Gastrocnemius medialis (tissue), 4 donors: ENCODE measurements at regions of chr12 and their contacts with region 1.

Region 1: GRCh38 chr12:42325653-42326474 is at the starts of genes PPHLN1 and ZCRB1:
- DNase-seq: peak; percentile 66 to 79
- ATAC-seq: peak; percentile 93 to 96
- H3K4me3 ChIP-seq: peak within 1 kb of the TSS; percentile 75 to 94 (median 83)
- H3K27ac ChIP-seq: peak within 1 kb of the TSS; percentile 84 to 90 (median 88)
- H3K4me1 ChIP-seq: peaks cover 14 to 17% of the 10 kb centered on the region in 2 donors
- H3K27me3 ChIP-seq: no peaks in the 10 kb centered on the region
- CTCF ChIP-seq: peak in 1 of 5 experiments; percentile 7
- POLR2A ChIP-seq: peak; percentile 65 to 71
- total RNA-seq, gene PPHLN1: 32.7 to 52.3 (median 43.5) TPM
- total RNA-seq, gene ZCRB1: 24.4 to 42.4 (median 35.0) TPM

Region 2: DNA sequence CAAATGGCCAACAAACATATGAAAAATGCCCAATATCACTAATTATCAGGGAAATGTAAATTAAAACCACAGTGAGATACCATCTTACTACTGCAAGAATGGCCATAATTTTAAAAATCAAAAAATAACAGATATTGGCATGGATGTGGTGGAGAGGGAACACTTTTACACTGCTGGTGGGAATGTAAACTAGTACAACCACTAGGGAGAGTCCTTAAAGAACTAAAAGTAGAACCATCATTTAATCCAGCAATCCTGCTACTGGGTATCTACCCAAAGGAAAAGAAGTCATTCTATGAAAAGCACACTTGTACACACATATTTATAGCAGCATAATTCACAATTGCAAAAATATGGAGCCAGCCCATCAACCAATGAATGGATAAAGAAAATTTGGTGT is 640.9 kb before region 1 on chr12:
- in situ Hi-C with region 1: loop called in 1 of 4 experiments (anchors 25 kb)
- intact Hi-C with region 1: no loop called
- DNase-seq: no peak
- ATAC-seq: no peak
- H3K4me3 ChIP-seq: no peak overlapping the region
- H3K27ac ChIP-seq: no peak overlapping the region
- H3K4me1 ChIP-seq: no peaks in the 10 kb centered on the region
- H3K27me3 ChIP-seq: no peaks in the 10 kb centered on the region
- CTCF ChIP-seq: peak in 3 of 5 experiments; percentile 22 to 52 (median 30)
- POLR2A ChIP-seq: no peak

Region 3: GRCh38 chr12:42315108-42315507 is 10.8 kb before region 1 on chr12:
- in situ Hi-C with region 1: no loop called
- intact Hi-C with region 1: no loop called
- DNase-seq: no peak
- ATAC-seq: no peak
- H3K4me3 ChIP-seq: no peak overlapping the region
- H3K27ac ChIP-seq: no peak overlapping the region
- H3K4me1 ChIP-seq: no peaks in the 10 kb centered on the region
- H3K27me3 ChIP-seq: no peaks in the 10 kb centered on the region
- CTCF ChIP-seq: no peak
- POLR2A ChIP-seq: no peak

Region 4: DNA sequence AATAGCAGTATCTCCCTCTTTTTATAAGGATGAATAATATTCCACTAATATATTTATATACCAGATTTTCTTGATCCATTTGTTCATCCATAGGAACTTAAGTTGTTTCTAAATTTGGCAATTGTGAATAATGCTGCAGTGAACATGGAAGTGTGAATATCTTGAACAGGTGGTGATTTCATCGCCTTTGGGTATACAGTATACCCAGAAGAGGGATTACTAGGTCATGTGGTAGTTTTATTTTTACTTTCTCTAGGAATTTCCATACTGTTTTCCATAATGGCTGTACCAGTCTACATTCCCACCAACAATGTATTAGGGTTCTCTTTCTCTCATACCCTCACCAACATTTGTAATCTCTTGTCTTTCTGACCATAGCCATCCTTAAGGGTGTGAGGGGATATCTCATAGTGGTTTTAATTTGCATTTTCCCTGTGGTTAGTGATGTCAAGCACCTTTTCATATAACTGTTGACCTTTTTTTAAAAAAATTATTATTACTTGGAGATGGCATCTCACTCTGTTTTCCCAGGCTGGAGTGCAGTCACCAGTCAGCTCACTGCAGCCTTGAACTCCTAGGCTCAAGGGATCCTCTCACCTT is 20.6 kb after region 1 on chr12:
- in situ Hi-C with region 1: no loop called
- intact Hi-C with region 1: no loop called
- DNase-seq: no peak
- ATAC-seq: no peak
- H3K4me3 ChIP-seq: no peak overlapping the region
- H3K27ac ChIP-seq: no peak overlapping the region
- H3K4me1 ChIP-seq: peaks cover 0 to 9% of the 10 kb centered on the region in 2 donors
- H3K27me3 ChIP-seq: no peaks in the 10 kb centered on the region
- CTCF ChIP-seq: no peak
- POLR2A ChIP-seq: no peak